Breast epithelium (tissue), 4 donors: ENCODE measurements at regions of chr15 and their contacts with region 1.

Region 1: GRCh38 chr15:66202526-66202925 is 51.0 kb downstream of the MEGF11 start:
- DNase-seq: no peak
- H3K4me3 ChIP-seq: no peak overlapping the region
- H3K27ac ChIP-seq: no peak overlapping the region
- H3K4me1 ChIP-seq: no peaks in the 10 kb centered on the region
- H3K27me3 ChIP-seq: no peaks in the 10 kb centered on the region
- CTCF ChIP-seq: no peak
- POLR2A ChIP-seq: no peak

Region 2: GRCh38 chr15:66489179-66489791 is 286.8 kb after region 1 on chr15:
- intact Hi-C with region 1: no loop called
- DNase-seq: no peak
- H3K4me3 ChIP-seq: no peak overlapping the region
- H3K27ac ChIP-seq: no peak overlapping the region
- H3K4me1 ChIP-seq: no peaks in the 10 kb centered on the region
- H3K27me3 ChIP-seq: no peaks in the 10 kb centered on the region
- CTCF ChIP-seq: no peak
- POLR2A ChIP-seq: no peak

Region 3: GRCh38 chr15:67784090-67784781 is 1581.7 kb after region 1 on chr15:
- intact Hi-C with region 1: loop called (anchors 10 kb)
- DNase-seq: no peak
- H3K4me3 ChIP-seq: no peak overlapping the region
- H3K27ac ChIP-seq: no peak overlapping the region
- H3K4me1 ChIP-seq: no peaks in the 10 kb centered on the region
- H3K27me3 ChIP-seq: no peaks in the 10 kb centered on the region
- CTCF ChIP-seq: no peak
- POLR2A ChIP-seq: no peak